PC-3 (cell line): ENCODE measurements at regions of chr22 and their contacts with region 1.

Region 1: DNA sequence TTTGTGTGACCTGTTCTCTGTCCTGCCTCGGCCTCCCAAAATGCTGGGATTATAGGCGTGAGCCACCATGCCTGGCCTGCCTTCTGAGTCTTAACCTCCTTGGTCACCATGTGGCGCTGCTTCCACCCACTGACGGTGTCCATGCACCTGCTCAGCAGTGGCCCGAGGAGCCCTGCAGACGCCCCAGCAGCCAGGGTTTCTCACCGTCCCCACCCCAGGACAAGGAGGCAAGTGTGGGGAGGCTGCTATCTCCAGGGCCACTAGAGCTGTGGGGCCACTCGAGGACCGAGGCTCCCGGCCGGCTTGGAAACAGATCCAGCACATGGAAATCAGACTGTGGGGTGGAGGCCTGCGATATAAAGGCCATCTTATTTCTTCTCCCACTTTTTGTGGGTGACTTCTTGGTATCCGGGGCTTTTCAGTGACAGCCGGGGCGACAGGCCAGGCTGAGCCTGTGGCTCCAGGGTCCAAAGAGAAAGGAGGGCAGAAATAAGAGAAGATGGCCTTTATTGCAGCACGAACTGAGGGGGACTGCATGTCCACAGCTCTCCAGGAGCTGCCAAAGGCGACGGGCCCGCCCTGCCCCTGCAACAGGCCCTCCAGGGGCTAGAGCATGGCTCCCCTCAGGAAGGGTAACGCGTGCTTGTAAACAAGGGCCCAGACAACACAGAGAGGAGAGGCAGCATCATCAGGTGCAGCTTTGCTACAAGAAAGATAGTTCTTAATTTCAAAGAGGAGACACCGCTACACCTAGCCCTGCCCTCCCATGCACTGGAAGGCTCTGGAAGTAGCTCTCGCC is 15.0 kb downstream of the TSPO start:
- DNase-seq: no peak
- ATAC-seq: no peak
- H3K4me3 ChIP-seq: no peak overlapping the region
- H3K27ac ChIP-seq: no peak overlapping the region
- H3K4me1 ChIP-seq: no peaks in the 10 kb centered on the region
- H3K27me3 ChIP-seq: no peaks in the 10 kb centered on the region
- CTCF ChIP-seq: no peak

Region 2: DNA sequence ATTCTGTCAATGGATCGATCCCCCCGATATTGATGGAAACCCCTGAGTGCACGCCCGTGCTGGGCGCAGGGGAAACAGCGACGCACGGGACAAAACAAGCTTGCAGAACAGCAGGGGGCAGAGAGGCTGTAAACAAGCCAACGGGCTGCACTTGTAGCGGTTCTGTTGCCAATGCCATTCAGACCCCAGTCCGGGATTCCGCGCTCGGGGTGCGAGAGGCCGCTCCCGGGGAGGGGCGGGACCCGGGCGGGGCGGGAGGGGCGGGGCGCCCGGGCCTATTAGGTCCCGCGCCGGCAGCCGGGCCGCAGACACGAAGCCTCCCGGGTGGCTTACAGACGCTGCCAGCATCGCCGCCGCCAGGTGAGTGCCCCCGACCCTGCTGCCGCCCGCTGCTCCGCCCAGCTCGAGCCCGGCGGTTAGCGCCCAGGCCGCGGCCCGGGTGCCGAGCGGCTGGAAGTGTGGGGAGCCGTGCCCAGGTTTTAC is 55.8 kb before region 1 on chr22 and contains the start of gene BIK:
- CTCF ChIA-PET with region 1: no interaction called
- POLR2A ChIA-PET with region 1: interaction called, 12 read pairs
- intact Hi-C with region 1: no loop called
- DNase-seq: peak; percentile 44
- ATAC-seq: peak; percentile 56
- H3K4me3 ChIP-seq: peak within 1 kb of the TSS; percentile 78
- H3K27ac ChIP-seq: no peak within 1 kb of the TSS
- H3K4me1 ChIP-seq: peaks cover 22% of the 10 kb centered on the region; the same call in 1 of the 2 replicates
- H3K27me3 ChIP-seq: no peaks in the 10 kb centered on the region
- CTCF ChIP-seq: no peak
- total RNA-seq, gene BIK: 24.6 and 29.4 TPM in 2 replicates

Region 3: GRCh38 chr22:43151251-43152002 is 14.9 kb before region 1 on chr22 and contains the start of gene TSPO:
- CTCF ChIA-PET with region 1: no interaction called
- POLR2A ChIA-PET with region 1: no interaction called
- intact Hi-C with region 1: no loop called
- DNase-seq: peak; percentile 39
- ATAC-seq: peak; percentile 64
- H3K4me3 ChIP-seq: peak within 1 kb of the TSS; percentile 70
- H3K27ac ChIP-seq: peak within 1 kb of the TSS; percentile 73
- H3K4me1 ChIP-seq: peaks cover 13% of the 10 kb centered on the region; the same call in 1 of the 2 replicates
- H3K27me3 ChIP-seq: no peaks in the 10 kb centered on the region
- CTCF ChIP-seq: no peak
- total RNA-seq, gene TSPO: 283 and 349 TPM in 2 replicates